Activated CD8-positive, alpha-beta T cell treated with anti-CD3 and anti-CD28 coated beads for 36 hours (primary cell): ENCODE measurements at regions of chr6 and their contacts with region 1.

Region 1: GRCh38 chr6:148758492-148758891 is 11.7 kb downstream of the UST start:
- DNase-seq: peak; percentile 67
- ATAC-seq: peak; percentile 66
- H3K4me3 Mint-ChIP-seq: peak overlapping the region; percentile 10
- H3K27ac Mint-ChIP-seq: no peak overlapping the region
- H3K4me1 Mint-ChIP-seq: peaks cover 59% of the 10 kb centered on the region
- H3K27me3 Mint-ChIP-seq: peaks cover 10% of the 10 kb centered on the region
- CTCF ChIP-seq: no peak

Region 2: GRCh38 chr6:148746363-148747144 is 11.9 kb before region 1 on chr6 and contains the start of gene UST:
- CTCF ChIA-PET with region 1: interaction called, 11 read pairs
- POLR2A ChIA-PET with region 1: interaction called, 13 read pairs
- intact Hi-C with region 1: no loop called
- DNase-seq: peak; percentile 82
- ATAC-seq: peak; percentile 57
- H3K4me3 Mint-ChIP-seq: peak within 1 kb of the TSS; percentile 90
- H3K27ac Mint-ChIP-seq: peak within 1 kb of the TSS; percentile 65
- H3K4me1 Mint-ChIP-seq: peaks cover 22% of the 10 kb centered on the region
- H3K27me3 Mint-ChIP-seq: peaks cover 38% of the 10 kb centered on the region
- CTCF ChIP-seq: peak; percentile 31
- total RNA-seq, gene UST: 1.2 to 1.5 TPM

Region 3: DNA sequence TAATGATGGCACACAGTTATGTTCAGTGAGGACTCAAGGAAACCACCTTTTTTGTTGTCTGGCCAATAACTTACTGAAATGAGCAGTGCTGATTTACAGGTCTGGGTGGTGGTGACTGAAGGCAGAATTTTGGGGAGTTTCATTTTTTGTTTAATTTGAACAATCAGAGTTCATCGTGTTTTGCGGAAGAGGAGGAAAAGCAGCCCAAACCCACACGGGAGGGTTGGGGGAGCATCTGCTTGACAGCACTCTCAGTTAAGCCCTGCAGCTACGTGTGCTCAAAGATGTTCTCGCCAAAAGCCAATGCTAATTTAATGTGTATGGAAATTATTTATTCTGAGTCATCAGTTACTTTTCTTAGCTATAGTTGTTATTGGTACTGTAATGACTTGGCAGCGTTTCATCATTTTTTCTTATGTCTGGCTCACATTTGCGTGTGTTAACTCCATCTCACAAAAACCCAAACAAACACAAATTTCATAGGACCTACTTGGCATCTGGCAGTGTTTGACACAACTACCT is 77.5 kb after region 1 on chr6:
- CTCF ChIA-PET with region 1: interaction called, 4 read pairs
- POLR2A ChIA-PET with region 1: interaction called, 6 read pairs
- intact Hi-C with region 1: loop called (anchors 10 kb)
- DNase-seq: peak; percentile 48
- ATAC-seq: peak; percentile 78
- H3K4me3 Mint-ChIP-seq: peak overlapping the region; percentile 44
- H3K27ac Mint-ChIP-seq: peak overlapping the region; percentile 88
- H3K4me1 Mint-ChIP-seq: peaks cover 18% of the 10 kb centered on the region
- H3K27me3 Mint-ChIP-seq: peaks cover 5% of the 10 kb centered on the region
- CTCF ChIP-seq: no peak

Region 4: DNA sequence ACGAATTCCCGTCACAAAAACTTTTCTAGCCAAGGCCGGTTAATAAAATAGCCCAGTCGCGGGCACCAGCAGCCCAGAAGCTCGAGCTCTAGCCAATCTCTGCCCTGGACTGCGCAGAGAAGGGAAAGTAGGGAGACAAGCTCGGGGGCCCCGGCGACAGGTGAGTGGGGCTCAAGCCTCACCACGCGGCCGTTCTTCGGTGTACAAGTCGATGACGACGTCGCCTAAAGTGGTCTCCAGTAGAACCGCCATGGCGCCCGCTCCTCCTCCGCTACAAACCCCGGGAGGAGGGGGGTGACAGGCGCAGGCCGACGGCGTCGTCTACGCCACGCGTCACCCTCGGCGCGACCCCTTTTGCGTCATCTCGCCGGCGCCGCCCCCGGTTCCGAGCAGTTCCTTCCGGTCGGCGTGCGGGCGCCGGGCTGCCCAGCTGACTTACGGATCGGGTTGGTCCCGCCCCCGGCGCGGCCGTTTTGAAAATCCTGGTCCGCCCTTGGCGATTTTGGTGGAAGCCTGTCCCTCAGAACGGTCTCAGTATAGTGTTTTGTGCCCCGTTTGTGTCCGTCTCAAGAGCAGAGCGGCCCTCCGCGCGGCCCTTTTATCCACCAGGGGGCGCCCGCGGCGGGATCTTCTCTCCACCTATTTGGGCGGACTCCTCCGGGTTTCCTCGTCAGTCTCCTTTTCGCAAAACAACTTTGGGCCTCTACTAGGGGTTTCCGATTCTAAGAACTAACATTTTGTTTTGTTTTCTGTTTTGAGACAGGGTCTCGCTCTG is 787.4 kb after region 1 on chr6 and contains the start of gene PPIL4:
- CTCF ChIA-PET with region 1: no interaction called
- POLR2A ChIA-PET with region 1: no interaction called
- intact Hi-C with region 1: no loop called
- DNase-seq: peak; percentile 97
- ATAC-seq: peak; percentile 90
- H3K4me3 Mint-ChIP-seq: peak within 1 kb of the TSS; percentile 92
- H3K27ac Mint-ChIP-seq: peak within 1 kb of the TSS; percentile 96
- H3K4me1 Mint-ChIP-seq: peaks cover 37% of the 10 kb centered on the region
- H3K27me3 Mint-ChIP-seq: no peaks in the 10 kb centered on the region
- CTCF ChIP-seq: peak; percentile 97
- total RNA-seq, gene PPIL4: 20.8 to 21.9 TPM